ENCODE measurements at regions of chr9 and their contacts with region 1.

Region 1: GRCh38 chr9:2125906-2126305 is 110.8 kb downstream of the SMARCA2 start:
- DNase-seq: no peak
- H3K4me3 ChIP-seq: no peak overlapping the region
- H3K27ac ChIP-seq: peak overlapping the region; percentile 41
- H3K4me1 ChIP-seq: no peaks in the 10 kb centered on the region
- H3K27me3 ChIP-seq: no peaks in the 10 kb centered on the region
- CTCF ChIP-seq: no peak

Region 2: GRCh38 chr9:1791191-1791590 is 334.7 kb before region 1 on chr9:
- intact Hi-C with region 1: no loop called
- DNase-seq: no peak
- H3K4me3 ChIP-seq: no peak overlapping the region
- H3K27ac ChIP-seq: no peak overlapping the region
- H3K4me1 ChIP-seq: no peaks in the 10 kb centered on the region
- H3K27me3 ChIP-seq: no peaks in the 10 kb centered on the region
- CTCF ChIP-seq: no peak

Region 3: GRCh38 chr9:2824564-2824963 is 698.7 kb after region 1 on chr9:
- intact Hi-C with region 1: loop called (anchors 10 kb)
- DNase-seq: no peak
- H3K4me3 ChIP-seq: no peak overlapping the region
- H3K27ac ChIP-seq: no peak overlapping the region
- H3K4me1 ChIP-seq: no peaks in the 10 kb centered on the region
- H3K27me3 ChIP-seq: no peaks in the 10 kb centered on the region
- CTCF ChIP-seq: no peak

Measured in colonic mucosa (tissue), 4 donors.